Motor neuron (in vitro differentiated cells): ENCODE measurements at regions of chr6 and their contacts with region 1.

Region 1: DNA sequence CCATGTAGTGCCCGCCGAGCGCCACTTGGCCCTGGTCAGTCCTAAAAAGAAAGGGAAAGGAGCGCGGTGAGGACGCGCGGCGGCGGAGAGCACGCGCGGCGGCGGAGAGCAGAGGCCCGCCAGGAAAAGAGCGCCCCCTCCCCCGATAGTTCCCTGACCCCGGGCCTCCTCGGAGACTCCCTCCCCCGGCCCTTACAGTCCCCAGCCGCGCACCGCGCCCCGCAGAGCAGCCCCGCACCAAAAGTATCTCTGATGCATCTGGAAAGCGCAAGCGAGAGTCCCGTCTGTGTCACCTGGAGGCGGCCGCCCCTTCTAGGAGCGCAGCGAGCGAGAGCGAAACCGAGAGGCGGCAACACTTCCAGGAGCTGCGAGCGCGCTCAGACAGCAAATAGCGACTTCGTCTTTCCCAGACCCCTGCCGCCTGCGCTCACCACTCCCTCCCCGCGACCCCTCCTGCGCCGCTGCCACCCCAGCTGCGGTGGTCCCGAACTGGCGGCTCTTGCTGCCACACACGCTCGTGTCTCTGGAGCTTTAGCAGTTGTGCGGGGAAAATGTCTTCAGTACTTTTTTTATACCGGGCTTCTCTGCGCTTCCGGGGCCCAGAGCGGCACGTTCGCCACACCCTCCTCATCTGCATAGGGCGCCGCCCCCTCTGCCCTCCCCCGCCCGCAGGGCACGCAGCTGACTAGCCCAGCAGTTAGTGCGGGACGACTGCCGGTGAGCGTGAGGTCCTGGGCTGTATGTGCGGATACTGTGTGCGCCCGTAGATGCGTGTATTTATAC is at the start of gene TENT5A:
- ATAC-seq: peak; percentile 61 to 85 (median 82)
- H3K4me3 ChIP-seq: peak within 1 kb of the TSS; percentile 60 to 94 (median 83)
- H3K27ac ChIP-seq: peak within 1 kb of the TSS in 1 of 2 donors; percentile 52
- H3K4me1 ChIP-seq: peaks cover 10 to 14% of the 10 kb centered on the region in 2 donors
- total RNA-seq, gene TENT5A: 2.2 to 54.3 (median 8.6) TPM

Region 2: DNA sequence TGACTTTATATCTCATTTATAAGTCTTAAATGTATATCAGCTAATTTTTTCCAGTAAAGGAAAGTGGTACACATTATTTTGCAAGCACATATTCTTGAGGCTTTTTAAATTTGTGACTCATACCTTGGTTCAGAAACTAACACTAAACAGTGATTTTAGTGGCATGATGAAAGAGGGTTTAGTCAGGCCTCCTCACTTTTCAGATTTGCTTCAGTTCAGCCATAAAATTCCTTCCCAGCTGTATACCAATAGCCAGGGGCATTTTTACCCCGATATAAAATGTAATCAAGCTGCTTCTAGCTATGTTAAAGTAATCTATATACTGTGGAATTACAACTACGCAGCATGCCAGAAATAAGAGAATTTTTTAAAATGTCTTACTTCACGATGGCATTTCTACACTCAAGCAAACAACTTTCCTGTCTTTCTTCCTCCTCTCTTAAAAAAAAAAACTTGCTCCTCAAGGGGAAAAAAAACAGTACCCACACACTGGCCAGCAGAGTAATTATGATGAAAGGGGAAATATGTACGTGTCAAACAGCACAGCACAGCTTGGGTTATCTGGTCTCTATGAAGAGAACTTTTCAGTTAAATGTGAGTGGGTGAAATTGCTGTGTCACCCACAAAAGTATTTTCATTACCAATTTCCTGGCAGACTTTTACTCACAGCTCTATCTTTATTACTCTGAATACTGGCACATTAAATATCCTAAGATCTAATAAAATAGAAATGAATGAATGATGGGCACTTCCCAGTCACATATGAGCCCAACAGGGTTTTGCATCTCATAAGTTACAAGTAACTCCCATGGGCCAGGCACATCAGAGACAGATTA is 245.0 kb after region 1 on chr6:
- in situ Hi-C with region 1: loop called in 1 of 9 experiments (anchors 25 kb)
- ATAC-seq: peak in 2 of 8 experiments; percentile 46 to 64
- H3K4me3 ChIP-seq: no peak overlapping the region
- H3K27ac ChIP-seq: no peak overlapping the region
- H3K4me1 ChIP-seq: no peaks in the 10 kb centered on the region

Region 3: GRCh38 chr6:82040405-82041221 is 288.3 kb after region 1 on chr6:
- in situ Hi-C with region 1: loop called in 2 of 9 experiments (anchors 25 kb)
- ATAC-seq: peak; percentile 91 to 99 (median 94)
- H3K4me3 ChIP-seq: no peak overlapping the region
- H3K27ac ChIP-seq: no peak overlapping the region
- H3K4me1 ChIP-seq: no peaks in the 10 kb centered on the region